ENCODE measurements at regions of chr20 and their contacts with region 1.

Region 1: DNA sequence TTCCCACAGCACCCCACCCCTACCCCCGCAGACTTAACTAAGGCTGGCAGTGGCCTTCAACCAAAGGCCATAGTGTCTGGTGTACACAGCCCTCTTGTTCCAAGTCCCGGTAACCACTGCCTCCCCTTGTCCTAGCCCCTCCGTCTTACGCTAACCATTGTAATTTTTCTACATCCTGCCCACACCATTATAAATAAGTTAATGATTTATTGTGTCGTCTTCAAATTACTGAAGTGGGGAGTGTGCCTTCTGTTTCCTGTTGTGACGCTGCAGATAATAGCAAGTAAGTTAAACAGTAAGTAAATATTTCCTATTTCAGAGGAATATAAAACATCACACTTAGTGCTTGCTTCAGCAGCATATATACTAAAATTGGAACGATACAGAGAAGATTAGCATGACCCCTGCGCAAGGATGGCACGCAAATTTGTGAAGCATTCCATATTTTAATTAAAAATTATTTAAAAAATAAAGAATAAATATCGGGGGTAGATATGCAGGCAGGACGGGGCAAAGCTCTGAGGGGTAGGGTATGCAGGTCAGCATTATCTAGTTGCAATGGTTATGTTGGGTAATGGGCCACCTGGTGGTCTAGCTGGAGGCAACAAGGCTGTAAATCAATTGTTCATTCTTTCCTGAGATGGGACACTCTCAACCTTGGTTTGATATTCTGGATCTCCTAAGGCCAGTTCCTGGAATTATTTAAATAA is 15.1 kb downstream of the SRSF6 start:
- DNase-seq: no peak
- ATAC-seq: no peak
- H3K4me3 ChIP-seq: no peak overlapping the region
- H3K4me3 Mint-ChIP-seq: no peak overlapping the region
- H3K27ac ChIP-seq: no peak overlapping the region
- H3K27ac Mint-ChIP-seq: no peak overlapping the region
- H3K4me1 ChIP-seq: peaks cover 0 to 2% of the 10 kb centered on the region in 2 experiments
- H3K4me1 Mint-ChIP-seq: peaks cover 6 to 24% (median 10%) of the 10 kb centered on the region in 3 donors
- H3K27me3 ChIP-seq: no peaks in the 10 kb centered on the region
- H3K27me3 Mint-ChIP-seq: no peaks in the 10 kb centered on the region

Region 2: DNA sequence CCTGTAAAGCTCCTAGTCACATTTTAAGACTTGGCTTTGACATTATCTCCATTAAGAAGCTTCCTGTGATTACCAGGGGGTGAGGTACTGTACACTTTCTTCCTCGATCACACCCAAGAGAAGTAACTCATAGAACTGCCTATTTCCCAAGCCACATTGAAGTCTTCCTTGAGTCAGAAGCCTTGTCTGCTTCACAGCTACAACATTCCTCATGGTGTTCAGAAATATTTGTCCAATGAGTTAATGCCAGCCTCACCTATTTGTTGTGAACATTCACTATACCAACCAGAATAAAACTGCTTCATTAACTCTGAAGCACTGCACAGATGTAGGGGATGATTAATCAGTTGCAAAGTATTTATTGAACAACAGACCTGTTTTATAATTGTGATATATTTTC is 905.4 kb before region 1 on chr20:
- CTCF ChIA-PET with region 1: no interaction called
- POLR2A ChIA-PET with region 1: no interaction called
- DNase-seq: no peak
- ATAC-seq: no peak
- H3K4me3 ChIP-seq: no peak overlapping the region
- H3K4me3 Mint-ChIP-seq: no peak overlapping the region
- H3K27ac ChIP-seq: no peak overlapping the region
- H3K27ac Mint-ChIP-seq: no peak overlapping the region
- H3K4me1 ChIP-seq: no peaks in the 10 kb centered on the region
- H3K4me1 Mint-ChIP-seq: no peaks in the 10 kb centered on the region
- H3K27me3 ChIP-seq: no peaks in the 10 kb centered on the region
- H3K27me3 Mint-ChIP-seq: no peaks in the 10 kb centered on the region

Region 3: GRCh38 chr20:43452404-43453126 is 20.3 kb before region 1 on chr20:
- CTCF ChIA-PET with region 1: interaction called, 3 to 11 read pairs
- POLR2A ChIA-PET with region 1: interaction called, 3 to 6 read pairs
- DNase-seq: no peak
- ATAC-seq: no peak
- H3K4me3 ChIP-seq: no peak overlapping the region
- H3K4me3 Mint-ChIP-seq: no peak overlapping the region
- H3K27ac ChIP-seq: no peak overlapping the region
- H3K27ac Mint-ChIP-seq: no peak overlapping the region
- H3K4me1 ChIP-seq: peaks cover 2 to 10% of the 10 kb centered on the region in 2 experiments
- H3K4me1 Mint-ChIP-seq: peaks cover 6 to 13% (median 9%) of the 10 kb centered on the region in 3 donors
- H3K27me3 ChIP-seq: peaks cover 0 to 45% of the 10 kb centered on the region in 2 experiments
- H3K27me3 Mint-ChIP-seq: peaks cover 19 to 39% of the 10 kb centered on the region in 2 donors

Region 4: DNA sequence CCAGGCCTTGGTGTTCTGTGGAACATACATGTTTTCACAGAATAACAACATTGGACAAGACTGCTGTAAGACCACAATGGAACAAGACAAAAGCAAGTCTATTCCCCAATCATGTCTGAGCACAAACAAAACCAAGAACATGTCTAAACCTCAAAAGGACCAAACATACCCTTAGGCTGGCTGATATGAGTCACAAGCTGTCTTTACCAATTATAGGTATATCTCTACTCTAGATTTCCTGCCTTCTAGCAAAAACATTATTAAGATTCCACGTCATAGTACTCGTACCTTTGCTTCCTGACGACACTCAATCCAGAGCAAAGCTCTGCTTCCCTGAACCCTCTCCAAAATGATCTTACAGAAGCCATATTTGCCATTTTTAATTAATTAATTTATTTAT is 19.3 kb after region 1 on chr20:
- CTCF ChIA-PET with region 1: no interaction called
- POLR2A ChIA-PET with region 1: no interaction called
- DNase-seq: no peak
- ATAC-seq: no peak
- H3K4me3 ChIP-seq: no peak overlapping the region
- H3K4me3 Mint-ChIP-seq: no peak overlapping the region
- H3K27ac ChIP-seq: no peak overlapping the region
- H3K27ac Mint-ChIP-seq: no peak overlapping the region
- H3K4me1 ChIP-seq: no peaks in the 10 kb centered on the region
- H3K4me1 Mint-ChIP-seq: no peaks in the 10 kb centered on the region
- H3K27me3 ChIP-seq: peaks cover 0 to 3% of the 10 kb centered on the region in 2 experiments
- H3K27me3 Mint-ChIP-seq: peaks cover 5 to 10% of the 10 kb centered on the region in 2 donors